ENCODE measurements at regions of chr11 and their contacts with region 1.

Region 1: GRCh38 chr11:72793425-72794367 is at the start of gene STARD10:
- DNase-seq: peak; percentile 97
- ATAC-seq: peak; percentile 96
- H3K4me3 Mint-ChIP-seq: peak within 1 kb of the TSS; percentile 96
- H3K27ac Mint-ChIP-seq: peak within 1 kb of the TSS; percentile 99
- H3K4me1 Mint-ChIP-seq: peaks cover 17% of the 10 kb centered on the region
- H3K27me3 Mint-ChIP-seq: no peaks in the 10 kb centered on the region
- total RNA-seq, gene STARD10: 7.8 to 8.0 TPM

Region 2: GRCh38 chr11:72722050-72722748 is 71.5 kb before region 1 on chr11:
- POLR2A ChIA-PET with region 1: interaction called, 13 read pairs
- DNase-seq: peak; percentile 86
- ATAC-seq: peak; percentile 87
- H3K4me3 Mint-ChIP-seq: peak overlapping the region; percentile 90
- H3K27ac Mint-ChIP-seq: peak overlapping the region; percentile 93
- H3K4me1 Mint-ChIP-seq: peaks cover 33% of the 10 kb centered on the region
- H3K27me3 Mint-ChIP-seq: no peaks in the 10 kb centered on the region

Region 3: DNA sequence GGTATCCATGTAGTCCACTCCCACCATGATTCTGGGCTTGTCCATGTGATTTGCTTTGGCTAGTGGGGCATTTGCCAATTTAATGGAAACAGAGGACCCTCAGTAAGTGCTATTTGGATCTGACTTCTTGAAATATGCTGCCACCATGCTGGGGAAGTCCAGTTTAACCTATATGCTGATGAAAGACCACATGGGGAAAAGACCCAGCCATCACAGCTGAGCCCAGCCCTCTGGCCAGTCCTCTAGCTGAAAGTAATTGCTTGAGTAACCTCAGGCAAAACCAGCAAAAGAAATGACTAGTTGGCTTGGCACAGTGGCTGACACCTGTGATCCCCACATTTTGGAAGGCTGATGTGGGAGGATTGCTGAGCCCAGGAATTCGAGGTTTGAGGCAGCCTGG is 82.0 kb after region 1 on chr11:
- POLR2A ChIA-PET with region 1: no interaction called
- DNase-seq: no peak
- ATAC-seq: no peak
- H3K4me3 Mint-ChIP-seq: no peak overlapping the region
- H3K27ac Mint-ChIP-seq: no peak overlapping the region
- H3K4me1 Mint-ChIP-seq: peaks cover 5% of the 10 kb centered on the region
- H3K27me3 Mint-ChIP-seq: no peaks in the 10 kb centered on the region

Measured in activated naive CD8-positive, alpha-beta T cell treated with anti-CD3 and anti-CD28 coated beads, Interleukin-2, amount 10 ng/mL, durations not matched to agents 7 days and 5 days (primary cell).